Activated B cell treated with CpG ODN at 0.5 μM for 24 hours (primary cell): ENCODE measurements at regions of chr13 and their contacts with region 1.

Region 1: DNA sequence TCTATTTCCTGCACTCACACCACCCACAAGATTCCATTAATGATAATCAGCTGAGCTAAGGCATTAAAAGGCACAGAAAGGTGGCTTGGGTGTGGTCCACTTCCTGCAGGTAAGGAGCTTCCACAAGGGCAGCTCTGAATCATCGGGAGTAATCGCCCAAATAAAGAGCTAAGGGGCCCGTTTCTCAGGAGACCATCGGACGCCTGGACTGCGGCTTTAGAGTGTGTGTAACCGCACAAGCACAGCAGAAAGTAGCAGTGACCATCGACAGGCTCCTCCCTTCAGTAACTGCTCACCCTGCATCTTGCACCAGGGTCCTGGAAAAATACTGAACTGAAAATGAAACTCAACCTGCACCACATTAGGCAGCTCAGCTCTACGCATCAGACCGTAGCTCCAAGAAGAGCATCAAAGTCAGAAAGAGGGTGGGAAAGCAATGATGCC is 6.0 kb downstream of the STK24 start:
- DNase-seq: peak; percentile 39
- ATAC-seq: peak; percentile 84
- H3K4me3 Mint-ChIP-seq: peak overlapping the region; percentile 82
- H3K27ac Mint-ChIP-seq: peak overlapping the region; percentile 91
- H3K4me1 Mint-ChIP-seq: peaks cover 99% of the 10 kb centered on the region
- H3K27me3 Mint-ChIP-seq: no peaks in the 10 kb centered on the region
- CTCF ChIP-seq: no peak

Region 2: DNA sequence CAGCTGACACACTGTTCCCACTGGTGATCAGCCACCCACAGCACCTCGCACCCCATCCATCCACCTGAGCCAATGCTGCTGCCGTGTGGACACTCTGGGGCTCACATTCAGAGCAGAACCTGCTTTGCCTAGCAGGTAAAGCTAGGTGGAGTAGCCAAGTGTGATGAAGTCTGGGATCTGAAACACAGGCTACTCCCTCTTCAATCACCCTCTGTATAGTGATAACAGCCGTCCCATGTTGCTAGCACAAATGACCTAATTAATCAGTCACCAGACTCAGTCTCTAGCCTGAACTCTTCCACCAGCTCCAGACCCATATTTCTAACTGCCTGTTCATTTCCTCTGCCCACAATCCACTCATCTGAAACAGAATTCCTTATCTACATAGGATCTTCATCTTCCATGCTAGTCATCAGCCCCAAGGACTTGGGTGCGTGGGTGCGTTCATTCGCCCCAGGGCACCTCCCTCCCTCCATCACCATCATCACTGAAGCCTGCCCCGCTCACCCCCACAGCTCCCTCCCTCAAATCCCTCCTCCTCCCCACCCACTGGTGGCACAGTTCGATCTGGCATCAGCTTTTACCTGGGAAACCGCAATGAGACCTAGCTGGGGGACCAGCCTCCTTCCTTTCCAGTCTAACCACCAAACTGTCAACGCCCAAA is 13.9 kb before region 1 on chr13:
- CTCF ChIA-PET with region 1: no interaction called
- POLR2A ChIA-PET with region 1: interaction called, 11 read pairs
- intact Hi-C with region 1: loop called (anchors 1 kb)
- DNase-seq: no peak
- ATAC-seq: peak; percentile 25
- H3K4me3 Mint-ChIP-seq: peak overlapping the region; percentile 0
- H3K27ac Mint-ChIP-seq: peak overlapping the region; percentile 63
- H3K4me1 Mint-ChIP-seq: peaks cover 83% of the 10 kb centered on the region
- H3K27me3 Mint-ChIP-seq: no peaks in the 10 kb centered on the region
- CTCF ChIP-seq: no peak